ENCODE measurements at regions of chr14 and their contacts with region 1.

Region 1: GRCh38 chr14:102774391-102775153 is 2.7 kb upstream of the TRAF3 start:
- DNase-seq: peak; percentile 57
- H3K4me3 Mint-ChIP-seq: no peak overlapping the region
- H3K27ac Mint-ChIP-seq: peak overlapping the region; percentile 31
- H3K4me1 Mint-ChIP-seq: peaks cover 10% of the 10 kb centered on the region
- H3K27me3 Mint-ChIP-seq: peaks cover 25% of the 10 kb centered on the region
- CTCF ChIP-seq: peak; percentile 39

Region 2: DNA sequence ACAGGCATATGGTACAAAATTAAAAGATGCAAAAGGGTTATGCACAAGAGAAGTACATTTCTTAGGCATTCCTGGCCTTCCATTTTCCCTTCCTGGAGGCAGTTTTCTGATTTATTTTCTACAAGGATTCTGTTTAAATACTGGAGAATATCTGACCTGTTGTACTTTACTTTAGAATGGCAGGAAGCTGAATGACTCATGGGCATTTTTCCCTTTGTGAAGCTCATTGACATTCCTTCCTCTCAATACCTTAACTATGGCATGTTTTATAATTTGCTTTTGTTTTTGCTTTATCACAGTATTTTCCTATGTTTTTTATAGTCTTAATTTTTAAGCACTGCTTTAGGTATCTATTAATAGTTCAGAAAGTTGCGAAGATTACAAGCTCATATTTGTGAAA is 119.4 kb before region 1 on chr14:
- CTCF ChIA-PET with region 1: no interaction called
- intact Hi-C with region 1: no loop called
- DNase-seq: peak; percentile 9
- H3K4me3 Mint-ChIP-seq: peak overlapping the region; percentile 7
- H3K27ac Mint-ChIP-seq: peak overlapping the region; percentile 63
- H3K4me1 Mint-ChIP-seq: peaks cover 36% of the 10 kb centered on the region
- H3K27me3 Mint-ChIP-seq: no peaks in the 10 kb centered on the region
- CTCF ChIP-seq: no peak

Region 3: GRCh38 chr14:102795060-102795925 is 20.7 kb after region 1 on chr14:
- CTCF ChIA-PET with region 1: no interaction called
- intact Hi-C with region 1: no loop called
- DNase-seq: peak; percentile 62
- H3K4me3 Mint-ChIP-seq: no peak overlapping the region
- H3K27ac Mint-ChIP-seq: peak overlapping the region; percentile 77
- H3K4me1 Mint-ChIP-seq: no peaks in the 10 kb centered on the region
- H3K27me3 Mint-ChIP-seq: no peaks in the 10 kb centered on the region
- CTCF ChIP-seq: no peak

Region 4: DNA sequence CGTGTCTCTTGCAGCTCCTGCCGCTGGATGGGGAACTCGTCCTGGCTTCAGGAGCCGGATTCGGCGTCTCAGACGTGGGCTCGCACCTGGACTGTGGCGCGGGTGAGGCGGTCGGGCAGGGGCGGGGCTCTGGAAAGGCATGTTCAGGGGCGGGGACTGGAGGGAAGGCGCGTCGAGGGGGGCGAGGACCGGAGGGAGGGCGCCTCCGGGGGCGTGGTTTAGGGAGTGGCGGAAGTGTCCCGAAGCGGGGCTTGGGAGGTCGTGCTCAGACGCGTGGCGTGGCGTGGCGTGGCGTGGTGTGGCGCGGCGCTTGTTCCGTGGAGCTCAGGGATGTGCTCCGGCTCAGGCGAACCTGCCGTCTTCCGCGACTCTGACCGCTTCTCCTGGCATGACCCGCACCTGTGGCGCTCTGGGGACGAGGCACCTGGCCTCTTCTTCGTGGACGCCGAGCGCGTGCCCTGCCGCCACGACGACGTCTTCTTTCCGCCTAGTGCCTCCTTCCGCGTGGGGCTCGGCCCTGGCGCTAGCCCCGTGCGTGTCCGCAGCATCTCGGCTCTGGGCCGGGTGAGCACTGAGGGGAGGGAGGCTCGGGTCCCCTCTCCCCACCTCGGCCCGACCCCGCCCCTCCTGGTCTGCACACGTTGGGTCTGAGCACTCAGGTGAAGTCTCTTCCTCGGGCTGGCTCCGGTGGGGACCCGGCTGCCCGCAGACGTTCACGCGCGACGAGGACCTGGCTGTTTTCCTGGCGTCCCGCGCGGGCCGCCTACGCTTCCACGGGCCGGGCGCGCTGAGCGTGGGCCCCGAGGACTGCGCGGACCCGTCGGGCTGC is 154.1 kb after region 1 on chr14:
- CTCF ChIA-PET with region 1: no interaction called
- intact Hi-C with region 1: loop called (anchors 10 kb)
- DNase-seq: peak; percentile 91
- H3K4me3 Mint-ChIP-seq: peak overlapping the region; percentile 54
- H3K27ac Mint-ChIP-seq: no peak overlapping the region
- H3K4me1 Mint-ChIP-seq: peaks cover 9% of the 10 kb centered on the region
- H3K27me3 Mint-ChIP-seq: no peaks in the 10 kb centered on the region
- CTCF ChIP-seq: no peak

Measured in Calu3 (cell line).